ENCODE measurements at regions of chr20 and their contacts with region 1.

Region 1: DNA sequence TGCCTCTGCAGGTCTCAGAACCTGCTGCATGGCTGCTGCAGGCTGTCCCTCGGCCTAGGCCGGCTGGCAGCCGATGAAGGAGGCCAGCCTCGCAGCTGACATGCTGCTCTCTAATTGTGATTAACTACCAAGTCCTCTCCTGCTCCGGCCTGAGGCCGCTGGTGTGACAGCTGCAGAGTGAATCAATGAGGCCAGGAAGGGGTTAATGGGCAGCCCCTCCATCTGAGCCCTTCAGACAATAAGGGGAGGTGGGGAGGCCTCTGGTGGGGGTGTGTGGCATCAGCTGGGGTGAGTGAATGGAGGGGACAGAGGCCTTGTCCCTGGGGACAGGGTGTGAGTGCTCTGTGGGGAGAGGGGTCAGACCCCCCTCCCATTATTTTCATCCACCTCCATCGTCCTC is 34.4 kb downstream of the SLC52A3 start:
- DNase-seq: no peak
- H3K4me3 ChIP-seq: no peak overlapping the region
- H3K27ac ChIP-seq: no peak overlapping the region
- H3K4me1 ChIP-seq: no peaks in the 10 kb centered on the region
- H3K27me3 ChIP-seq: no peaks in the 10 kb centered on the region
- CTCF ChIP-seq: no peak
- EP300 ChIP-seq: no peak
- POLR2A ChIP-seq: no peak

Region 2: DNA sequence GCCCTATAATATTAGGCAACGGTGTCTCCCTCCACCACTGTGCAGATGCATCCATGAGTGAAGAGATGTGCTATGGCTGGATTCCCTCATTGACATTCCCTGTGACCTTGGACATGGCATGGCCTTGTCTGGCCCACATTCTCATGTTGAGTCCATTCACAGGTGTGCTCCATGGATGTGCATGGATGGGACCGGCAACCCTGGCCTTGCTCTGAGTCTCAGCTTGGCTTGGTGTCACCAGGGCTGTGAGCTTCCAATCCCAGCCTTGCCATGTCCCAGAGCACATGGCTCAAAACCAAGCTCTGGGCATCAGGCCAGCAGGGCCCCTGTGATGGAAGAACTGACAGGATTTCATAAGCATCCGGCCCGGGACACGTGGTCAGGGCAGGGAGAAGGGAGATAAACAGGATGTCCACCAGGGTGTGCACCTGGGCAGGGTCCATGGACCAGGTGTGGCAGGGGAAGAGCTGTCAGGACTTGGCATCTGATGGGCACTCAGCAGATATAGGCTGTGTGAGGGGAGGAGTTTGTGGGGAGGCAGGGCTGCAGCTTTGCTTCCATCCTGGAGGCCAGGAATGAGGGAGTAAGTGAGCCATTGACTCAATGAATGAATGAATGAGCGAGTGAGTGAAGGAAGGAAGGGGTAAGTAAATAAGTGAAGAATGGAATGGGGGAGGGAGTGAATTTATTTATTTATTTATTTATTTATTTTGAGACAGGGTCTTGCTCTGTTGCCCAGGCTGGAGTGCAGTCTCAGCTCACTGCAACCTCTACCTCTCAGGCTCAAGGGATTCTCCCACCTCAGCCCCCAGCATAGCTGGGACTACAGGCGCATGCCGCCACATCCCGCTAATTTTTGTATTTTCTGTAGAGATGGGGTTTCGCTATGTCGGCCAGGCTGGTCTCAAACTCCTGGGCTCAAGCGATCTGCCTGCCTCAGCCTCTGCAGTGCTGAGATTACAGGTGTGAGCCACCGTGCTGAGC is 371.3 kb before region 1 on chr20:
- intact Hi-C with region 1: loop called in 1 of 4 experiments (anchors 10 kb)
- DNase-seq: peak in 4 of 5 donors; percentile 34 to 63 (median 61)
- H3K4me3 ChIP-seq: no peak overlapping the region
- H3K27ac ChIP-seq: no peak overlapping the region
- H3K4me1 ChIP-seq: no peaks in the 10 kb centered on the region
- H3K27me3 ChIP-seq: no peaks in the 10 kb centered on the region
- CTCF ChIP-seq: no peak
- EP300 ChIP-seq: no peak
- POLR2A ChIP-seq: no peak

Measured in ovary (tissue), 10 donors.